Dorsolateral prefrontal cortex (tissue), 120 donors: ENCODE measurements at regions of chr13 and their contacts with region 1.

Region 1: DNA sequence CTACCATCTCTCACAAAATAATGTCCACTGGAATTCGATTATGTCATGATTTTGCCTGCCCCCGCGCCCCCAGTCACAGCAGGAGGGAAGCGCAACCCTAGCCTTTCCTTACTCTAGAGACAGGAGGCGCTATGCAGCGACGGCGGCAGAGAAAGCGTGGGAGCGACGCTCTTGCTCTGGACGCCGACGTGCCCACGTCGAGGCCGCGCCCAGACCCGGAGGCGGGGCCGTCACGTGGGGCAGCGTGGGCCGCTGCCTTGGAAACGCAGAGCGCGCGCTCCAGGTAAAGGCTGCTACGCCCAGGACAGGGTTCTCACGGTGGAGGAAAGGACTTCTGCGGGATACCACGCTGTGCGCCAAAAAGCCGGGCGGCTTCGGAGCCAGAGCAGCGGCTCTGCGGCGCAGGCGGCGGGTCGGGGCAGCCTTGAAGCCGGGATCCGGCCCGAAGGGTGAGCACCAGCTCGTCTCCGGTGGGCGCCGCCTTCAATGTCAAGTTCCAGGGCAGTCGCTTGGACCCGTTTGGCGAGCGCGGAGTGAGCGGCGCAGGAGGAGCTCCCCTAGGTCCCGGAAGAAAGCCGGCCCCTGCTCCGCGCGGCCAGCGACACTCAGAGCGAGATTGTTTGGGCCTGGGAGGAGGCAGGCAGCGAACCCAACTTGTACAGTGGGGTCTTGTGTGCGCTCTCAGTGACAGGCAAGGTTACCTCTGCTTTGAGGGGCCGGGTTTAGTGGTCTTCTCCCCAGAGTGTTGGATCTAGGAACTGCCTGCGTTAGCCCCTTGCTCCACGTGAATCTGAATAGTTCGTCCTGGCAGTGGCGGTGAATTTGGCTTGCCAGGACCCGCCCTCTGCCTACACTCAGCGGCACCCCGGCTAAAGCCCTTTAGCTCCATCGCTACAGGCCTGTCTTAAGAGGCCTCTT is 121.7 kb downstream of the MRPL57 start:
- DNase-seq: peak; percentile 71 to 91 (median 83)
- H3K4me3 ChIP-seq: peak overlapping the region; percentile 75 to 100 (median 96)
- H3K27ac ChIP-seq: peak overlapping the region in 58 of 59 donors; percentile 44 to 95 (median 86)
- H3K27me3 ChIP-seq: no peaks in the 10 kb centered on the region
- CTCF ChIP-seq: peak; percentile 90 to 99 (median 97)

Region 2: DNA sequence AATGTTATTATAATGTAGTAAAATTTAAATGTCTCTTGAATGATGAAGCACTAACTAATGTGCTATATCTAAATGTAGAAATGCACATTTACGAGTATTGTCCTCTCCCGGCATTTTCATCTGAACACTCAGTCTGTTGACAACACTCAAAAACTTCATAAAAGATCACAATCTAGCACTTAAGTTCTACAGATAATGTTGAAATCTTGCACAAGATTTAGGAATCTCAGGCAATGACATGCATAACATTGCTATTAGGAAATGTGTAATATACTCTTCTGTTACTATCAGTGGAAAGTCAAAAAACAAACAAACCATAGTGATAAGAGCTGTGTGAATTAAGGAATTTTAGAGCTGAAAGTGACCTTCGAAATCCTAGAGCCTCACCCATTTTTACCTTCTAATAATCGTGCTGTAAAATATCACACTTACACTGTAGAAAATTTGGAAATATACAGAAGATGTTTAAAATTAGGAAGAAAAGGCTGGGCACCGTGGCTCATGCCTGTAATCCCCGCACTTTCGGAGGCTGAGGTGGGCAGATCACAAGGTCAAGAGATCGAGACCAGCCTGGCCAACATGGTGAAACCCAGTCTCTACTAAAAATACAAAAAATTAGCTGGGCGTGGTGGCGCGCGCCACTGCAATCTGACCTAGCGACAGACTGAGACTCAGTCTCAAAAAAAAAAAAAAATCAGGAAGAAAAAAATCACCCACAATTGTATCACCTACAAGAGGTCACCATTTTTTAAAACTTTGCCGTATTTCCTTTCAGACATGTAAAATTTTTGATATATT is 357.9 kb before region 1 on chr13:
- intact Hi-C with region 1: loop called (anchors 5 to 10 kb)
- DNase-seq: no peak
- H3K4me3 ChIP-seq: no peak overlapping the region
- H3K27ac ChIP-seq: no peak overlapping the region
- H3K27me3 ChIP-seq: peaks cover 0 to 2% (median 0%) of the 10 kb centered on the region in 45 donors
- CTCF ChIP-seq: no peak

Region 3: GRCh38 chr13:20945952-20946383 is 352.2 kb before region 1 on chr13:
- intact Hi-C with region 1: loop called (anchors 5 to 10 kb)
- DNase-seq: no peak
- H3K4me3 ChIP-seq: peak overlapping the region in 49 of 59 donors; percentile 5 to 63 (median 34)
- H3K27ac ChIP-seq: no peak overlapping the region
- H3K27me3 ChIP-seq: peaks cover 0 to 25% (median 6%) of the 10 kb centered on the region in 45 donors
- CTCF ChIP-seq: no peak

Region 4: GRCh38 chr13:21176220-21176982 is 121.8 kb before region 1 on chr13 and contains the starts of genes MRPL57 and SKA3:
- intact Hi-C with region 1: loop called (anchors 2 to 5 kb)
- DNase-seq: peak; percentile 82 to 96 (median 89)
- H3K4me3 ChIP-seq: peak within 1 kb of the TSS; percentile 71 to 100 (median 92)
- H3K27ac ChIP-seq: peak within 1 kb of the TSS; percentile 75 to 98 (median 92)
- H3K27me3 ChIP-seq: no peaks in the 10 kb centered on the region
- CTCF ChIP-seq: peak in 51 of 56 donors; percentile 4 to 65 (median 44)
- total RNA-seq, gene MRPL57: 12.7 to 28.6 (median 19.2) TPM
- total RNA-seq, gene SKA3: 0.16 to 3.6 (median 1.3) TPM in 117 of 120 experiments, not detected in the others

Region 5: DNA sequence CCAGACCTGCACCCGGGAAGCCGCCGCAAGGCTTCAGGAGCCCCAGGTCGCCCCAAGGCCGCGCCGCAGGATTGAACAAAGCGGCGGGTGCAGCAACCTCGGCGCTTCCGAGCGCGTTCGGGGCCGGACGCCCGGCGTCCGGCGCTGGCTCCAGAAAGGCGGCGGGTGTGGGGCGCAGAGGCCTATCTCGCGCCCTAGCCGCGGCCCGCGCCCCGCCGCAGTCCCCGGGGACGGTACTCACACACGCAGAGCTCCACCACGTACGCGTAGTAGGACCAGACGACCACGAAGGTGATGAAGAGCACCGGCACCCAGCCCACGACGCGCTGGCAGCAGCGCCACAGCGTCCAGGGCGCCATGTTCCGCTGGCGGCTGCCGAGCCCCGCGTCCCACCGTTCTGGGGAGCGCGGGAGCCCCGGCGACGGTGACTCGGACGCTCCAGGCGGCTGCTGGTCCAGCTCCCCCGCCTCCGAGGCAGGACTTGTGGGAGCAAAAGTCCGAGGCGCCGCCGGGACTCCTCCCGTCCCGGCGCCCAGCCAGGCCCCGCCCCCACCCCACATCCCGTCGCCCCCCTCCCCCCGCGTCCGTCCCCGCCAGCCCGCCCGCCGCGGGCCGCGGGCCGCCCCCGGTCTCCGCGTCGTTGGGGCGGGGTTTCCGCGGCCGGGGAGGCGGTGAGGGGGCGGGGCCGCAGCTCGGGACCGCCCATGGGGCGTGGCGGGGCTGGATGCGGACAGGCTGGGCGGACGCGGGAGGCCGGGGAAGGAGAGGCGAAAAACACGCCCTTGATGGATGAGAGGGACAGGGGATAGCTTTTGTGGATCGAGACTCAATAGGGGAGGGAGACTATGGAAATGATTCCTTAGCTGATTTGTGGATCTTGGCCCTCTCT is 160.9 kb after region 1 on chr13 and contains the start of gene ZDHHC20:
- intact Hi-C with region 1: loop called in 1 of 2 experiments (anchors 1 kb)
- DNase-seq: peak; percentile 74 to 95 (median 88)
- H3K4me3 ChIP-seq: peak within 1 kb of the TSS; percentile 73 to 100 (median 97)
- H3K27ac ChIP-seq: peak within 1 kb of the TSS; percentile 50 to 98 (median 94)
- H3K27me3 ChIP-seq: no peaks in the 10 kb centered on the region
- CTCF ChIP-seq: peak in 12 of 56 donors; percentile 0 to 35 (median 13)
- total RNA-seq, gene ZDHHC20: 34.9 to 214 (median 72.5) TPM

Region 6: DNA sequence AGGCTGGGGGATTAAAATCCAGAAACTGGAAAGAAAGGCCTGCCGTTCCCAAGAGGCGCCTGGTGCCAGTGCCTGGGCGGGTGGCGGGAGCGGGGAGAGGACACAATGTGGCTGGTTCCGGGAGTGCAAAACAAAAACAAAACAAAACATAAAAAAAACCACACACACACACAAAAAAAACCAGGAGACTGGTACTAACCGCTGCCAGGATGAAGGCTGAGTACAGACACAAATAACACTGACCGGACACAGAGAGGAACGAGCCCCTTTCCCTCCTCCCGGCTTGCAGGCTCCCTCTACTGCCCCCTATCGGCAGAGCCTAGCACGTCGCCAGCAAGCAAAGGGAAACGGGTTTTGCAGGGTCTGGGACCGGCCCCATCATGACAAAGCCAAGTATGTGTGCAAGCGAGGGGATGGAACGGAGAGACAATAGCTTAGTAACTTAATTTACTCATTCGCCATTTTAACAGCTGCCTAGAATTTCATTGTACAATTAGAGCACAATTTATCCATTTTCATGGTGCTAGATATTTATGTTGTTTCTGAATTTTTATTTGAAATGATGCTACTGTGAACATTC is 178.8 kb after region 1 on chr13:
- intact Hi-C with region 1: loop called (anchors 1 kb)
- DNase-seq: peak; percentile 71 to 90 (median 86)
- H3K4me3 ChIP-seq: peak overlapping the region; percentile 3 to 73 (median 51)
- H3K27ac ChIP-seq: peak overlapping the region; percentile 5 to 99 (median 93)
- H3K27me3 ChIP-seq: no peaks in the 10 kb centered on the region
- CTCF ChIP-seq: peak; percentile 91 to 99 (median 97)